SK-N-SH (cell line): ENCODE measurements at regions of chr11 and their contacts with region 1.

Region 1: GRCh38 chr11:3412837-3413236 is 33.9 kb upstream of the ZNF195 start:
- DNase-seq: no peak
- H3K4me3 ChIP-seq: no peak overlapping the region
- H3K27ac ChIP-seq: no peak overlapping the region
- H3K4me1 ChIP-seq: no peaks in the 10 kb centered on the region; a peak in 1 of 4 replicates
- H3K27me3 ChIP-seq: no peaks in the 10 kb centered on the region
- CTCF ChIP-seq: no peak
- EP300 ChIP-seq: no peak
- RAD21 ChIP-seq: no peak

Region 2: DNA sequence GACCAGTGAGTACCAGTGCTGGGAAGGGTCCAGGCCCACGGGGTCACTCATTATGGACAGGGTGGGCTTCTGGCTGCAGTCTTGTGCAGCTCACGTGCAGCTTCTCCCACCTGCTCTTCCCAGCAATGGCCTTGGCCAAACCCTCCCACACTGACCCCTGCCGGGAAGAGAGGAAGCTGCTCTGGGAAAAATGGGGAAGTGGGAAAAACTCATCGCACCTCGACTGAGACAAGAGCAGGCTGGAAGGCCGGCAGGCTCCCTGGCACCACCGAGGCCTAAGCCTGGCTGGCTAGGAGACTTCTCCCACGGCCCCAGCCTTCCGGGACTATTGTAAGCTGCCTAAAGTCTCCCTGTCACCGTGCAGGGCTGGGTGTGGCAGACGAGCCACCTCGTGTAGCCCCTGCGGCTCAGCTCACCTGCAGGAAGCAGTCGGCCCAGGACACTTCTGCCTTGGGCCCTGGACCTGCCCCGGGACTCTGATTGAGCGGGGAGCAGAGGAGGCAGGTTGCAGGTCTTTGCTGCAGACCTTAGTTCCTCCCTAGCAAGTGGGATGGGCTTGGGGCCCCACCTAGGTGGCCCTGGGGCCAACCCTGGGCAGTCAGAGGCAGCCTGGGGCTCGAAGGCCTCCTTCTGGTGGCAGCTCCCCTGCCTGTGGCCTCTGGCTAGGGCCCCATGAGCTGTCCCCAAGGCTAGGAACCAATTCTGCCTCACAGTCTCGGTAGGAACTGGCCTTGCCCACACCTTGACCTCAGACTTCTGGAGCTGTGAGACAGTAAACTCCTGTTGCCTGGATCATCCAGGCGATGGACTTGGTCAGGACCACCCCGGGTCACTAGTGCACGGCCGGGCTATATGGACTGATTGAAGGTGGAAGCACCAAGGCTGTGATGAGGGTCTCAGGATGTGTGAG is 217.3 kb before region 1 on chr11:
- CTCF ChIA-PET with region 1: no interaction called
- POLR2A ChIA-PET with region 1: no interaction called
- DNase-seq: no peak
- H3K4me3 ChIP-seq: no peak overlapping the region
- H3K27ac ChIP-seq: no peak overlapping the region; a peak in 1 of 4 replicates
- H3K4me1 ChIP-seq: peaks cover 0 to 13% of the 10 kb centered on the region in 2 experiments; a peak in 1 of 4 replicates
- H3K27me3 ChIP-seq: no peaks in the 10 kb centered on the region
- CTCF ChIP-seq: no peak
- EP300 ChIP-seq: no peak
- RAD21 ChIP-seq: no peak; the same call in 1 of the 2 replicates

Region 3: DNA sequence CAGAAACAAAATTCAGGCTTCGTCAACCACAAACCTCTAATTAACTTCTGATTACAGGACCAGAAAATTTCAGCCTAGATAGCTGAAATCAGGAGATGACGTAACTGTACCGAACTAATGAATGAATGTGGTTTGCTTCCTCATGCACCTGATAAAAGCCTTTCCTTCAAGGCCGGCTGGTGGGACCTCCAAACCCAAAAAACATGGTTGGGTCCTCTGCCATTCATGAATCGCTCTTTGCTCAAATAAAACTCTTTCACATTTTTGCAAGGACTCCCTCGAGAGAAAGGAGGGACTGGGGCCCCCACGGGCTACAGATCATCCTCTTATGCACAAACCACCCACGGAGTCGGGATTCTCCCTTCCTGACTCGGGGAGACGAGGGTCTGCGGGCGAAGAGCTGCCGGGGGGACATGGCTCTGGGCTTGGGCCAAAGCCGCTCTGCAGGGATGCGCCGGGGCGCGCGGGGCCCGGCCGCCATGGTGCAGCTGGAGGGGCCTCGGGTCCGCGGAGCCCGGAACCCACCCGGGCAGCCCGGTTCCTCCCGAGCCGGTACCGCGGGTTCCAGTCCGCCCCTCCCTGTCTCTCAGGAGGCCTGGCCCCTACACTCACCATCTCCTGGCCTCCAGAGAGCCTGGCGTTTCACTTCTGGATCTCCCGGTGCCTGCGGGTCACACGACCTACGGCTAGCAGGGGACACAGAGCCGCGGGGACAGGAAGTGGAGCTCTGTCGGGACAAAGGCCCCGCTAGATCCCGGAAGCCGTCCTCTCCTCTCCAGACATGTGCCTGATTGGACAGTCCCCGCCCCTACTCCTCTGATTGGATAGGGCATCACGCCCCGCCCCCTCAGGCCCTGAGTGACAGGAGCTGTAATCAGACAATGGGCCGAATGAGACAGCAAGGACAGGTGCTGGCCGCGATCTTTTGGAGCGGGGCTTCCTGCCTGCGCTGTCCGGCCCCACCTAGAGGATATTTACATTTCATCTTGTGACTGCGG is 34.1 kb before region 1 on chr11 and contains the start of gene ZNF195:
- CTCF ChIA-PET with region 1: interaction called, 11 read pairs
- POLR2A ChIA-PET with region 1: interaction called, 6 read pairs
- DNase-seq: peak; percentile 98
- H3K4me3 ChIP-seq: peak within 1 kb of the TSS; percentile 96 to 98
- H3K27ac ChIP-seq: peak within 1 kb of the TSS; percentile 68 to 94
- H3K4me1 ChIP-seq: peaks cover 16 to 45% of the 10 kb centered on the region in 2 experiments; a peak in 3 of 4 replicates
- H3K27me3 ChIP-seq: no peaks in the 10 kb centered on the region
- CTCF ChIP-seq: no peak
- EP300 ChIP-seq: 0 out of 4 replicates have a peak, but pooled peaks of 1 of the 2 experiments have one; percentile 24
- RAD21 ChIP-seq: peak; percentile 15; the same call in 1 of the 2 replicates
- polyA plus RNA-seq, gene ZNF195: 13.2 and 21.7 TPM in 2 replicates